ENCODE measurements at regions of chr20 and their contacts with region 1.

Region 1: DNA sequence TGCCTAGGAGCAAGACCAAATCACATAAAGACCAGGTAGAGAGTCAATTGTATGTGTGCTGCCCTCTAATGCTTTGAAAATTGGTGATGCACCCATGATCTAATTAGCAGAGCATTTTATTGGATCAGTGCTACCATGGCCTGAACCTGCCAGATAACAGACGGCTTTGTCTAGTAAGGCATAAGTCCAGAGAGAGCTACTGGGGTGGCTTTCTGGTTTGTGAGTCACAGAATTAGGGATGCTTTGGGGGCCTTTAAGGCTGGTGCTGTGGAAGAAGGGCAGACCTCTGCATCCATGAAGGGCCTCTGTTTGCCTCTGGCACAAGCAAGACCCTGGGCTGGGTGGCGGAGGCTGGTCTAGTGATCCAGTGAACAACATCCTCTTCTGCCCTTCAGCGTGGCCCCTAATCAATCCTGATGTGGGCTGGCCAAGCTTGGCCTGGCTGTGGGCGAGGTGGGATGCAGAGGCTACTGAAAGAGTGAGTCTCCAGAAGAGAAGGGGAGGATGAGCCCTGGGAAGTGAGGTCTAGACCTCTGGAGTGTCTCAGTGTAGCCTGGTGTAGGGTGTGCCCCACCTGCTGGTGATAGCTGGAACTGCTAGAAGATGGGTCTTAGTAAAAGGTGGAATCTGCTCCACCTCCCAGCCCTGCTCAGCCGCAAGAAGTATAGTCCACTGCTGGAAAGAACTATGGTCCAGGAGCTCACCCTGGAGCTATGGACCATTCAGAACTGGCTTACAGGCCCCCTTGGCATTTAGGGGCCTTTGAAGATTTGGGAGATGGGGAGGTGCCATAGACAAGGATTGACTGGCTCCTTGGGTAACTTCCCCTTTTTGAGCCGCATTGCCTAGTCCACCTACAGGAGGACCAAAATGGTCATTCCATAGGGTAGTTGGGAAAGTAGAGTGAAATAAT is 36.7 kb upstream of the AAR2 start:
- DNase-seq: peak; percentile 95
- H3K4me3 ChIP-seq: no peak overlapping the region
- H3K27ac ChIP-seq: no peak overlapping the region
- H3K4me1 ChIP-seq: peaks cover 0 to 8% (median 3%) of the 10 kb centered on the region in 4 donors
- H3K27me3 ChIP-seq: no peaks in the 10 kb centered on the region
- CTCF ChIP-seq: peak; percentile 80 to 94 (median 91)
- EP300 ChIP-seq: no peak
- POLR2A ChIP-seq: no peak

Region 2: GRCh38 chr20:35994994-35995453 is 204.6 kb before region 1 on chr20:
- intact Hi-C with region 1: loop called (anchors 5 kb)
- DNase-seq: peak; percentile 96
- H3K4me3 ChIP-seq: no peak overlapping the region
- H3K27ac ChIP-seq: no peak overlapping the region
- H3K4me1 ChIP-seq: peaks cover 0 to 7% (median 3%) of the 10 kb centered on the region in 4 donors
- H3K27me3 ChIP-seq: no peaks in the 10 kb centered on the region
- CTCF ChIP-seq: peak; percentile 84 to 90 (median 89)
- EP300 ChIP-seq: no peak
- POLR2A ChIP-seq: no peak

Region 3: GRCh38 chr20:36121981-36122930 is 77.3 kb before region 1 on chr20:
- intact Hi-C with region 1: no loop called
- DNase-seq: no peak
- H3K4me3 ChIP-seq: no peak overlapping the region
- H3K27ac ChIP-seq: no peak overlapping the region
- H3K4me1 ChIP-seq: no peaks in the 10 kb centered on the region
- H3K27me3 ChIP-seq: no peaks in the 10 kb centered on the region
- CTCF ChIP-seq: no peak
- EP300 ChIP-seq: no peak
- POLR2A ChIP-seq: no peak

Region 4: GRCh38 chr20:36155991-36156390 is 43.6 kb before region 1 on chr20:
- intact Hi-C with region 1: loop called (anchors 1 kb)
- DNase-seq: no peak
- H3K4me3 ChIP-seq: no peak overlapping the region
- H3K27ac ChIP-seq: peak overlapping the region in 2 of 4 donors; percentile 76 to 81
- H3K4me1 ChIP-seq: peaks cover 28 to 44% (median 40%) of the 10 kb centered on the region in 4 donors
- H3K27me3 ChIP-seq: no peaks in the 10 kb centered on the region
- CTCF ChIP-seq: no peak
- EP300 ChIP-seq: no peak
- POLR2A ChIP-seq: no peak

Region 5: GRCh38 chr20:36439040-36439730 is 239.6 kb after region 1 on chr20:
- intact Hi-C with region 1: loop called (anchors 2 kb)
- DNase-seq: no peak
- H3K4me3 ChIP-seq: no peak overlapping the region
- H3K27ac ChIP-seq: no peak overlapping the region
- H3K4me1 ChIP-seq: peaks cover 0 to 18% (median 11%) of the 10 kb centered on the region in 4 donors
- H3K27me3 ChIP-seq: peaks cover 0 to 23% (median 5%) of the 10 kb centered on the region in 4 donors
- CTCF ChIP-seq: peak; percentile 79 to 94 (median 81)
- EP300 ChIP-seq: no peak
- POLR2A ChIP-seq: no peak

Measured in esophagus muscularis mucosa (tissue), 4 donors.